AG04449 (cell line): ENCODE measurements at regions of chr9 and their contacts with region 1.

Region 1: DNA sequence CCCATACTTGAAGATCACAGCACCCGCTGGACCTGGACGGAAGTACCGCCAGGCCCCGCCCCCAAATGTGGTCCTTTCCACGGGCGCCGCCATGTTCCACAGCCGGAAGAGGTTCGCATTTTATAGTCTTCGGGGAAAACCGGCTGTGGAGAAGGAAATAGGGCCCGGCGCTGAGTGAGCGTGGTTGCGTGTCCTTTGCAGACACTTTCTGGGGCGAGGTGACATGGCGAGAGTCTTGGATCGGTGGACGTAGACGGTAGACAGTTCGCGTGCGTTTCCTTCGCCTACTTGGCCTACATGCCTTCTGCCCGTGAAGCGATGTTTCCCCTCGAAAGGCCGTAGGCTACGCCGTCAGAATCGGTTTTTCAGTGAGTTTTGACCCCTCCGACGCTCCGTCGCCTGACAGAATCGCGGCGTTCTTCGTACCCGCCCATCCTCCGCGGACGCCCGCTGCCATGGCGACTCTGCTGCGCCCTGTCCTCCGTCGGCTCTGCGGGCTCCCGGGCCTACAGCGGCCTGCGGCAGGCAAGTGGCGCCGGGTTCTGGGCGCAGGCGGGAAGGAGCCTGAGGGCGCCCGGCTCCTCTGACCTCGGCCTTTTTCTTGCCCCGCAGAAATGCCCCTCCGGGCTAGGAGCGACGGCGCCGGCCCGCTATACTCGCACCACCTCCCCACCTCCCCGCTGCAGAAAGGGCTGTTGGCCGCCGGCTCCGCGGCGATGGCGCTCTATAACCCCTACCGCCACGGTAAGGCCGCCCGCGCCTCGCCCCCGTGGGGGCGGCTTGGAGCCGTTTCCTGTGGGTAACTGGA is at the starts of genes COQ4 and TRUB2:
- DNase-seq: peak; percentile 59
- H3K4me3 ChIP-seq: peak within 1 kb of the TSS; percentile 97
- CTCF ChIP-seq: no peak

Region 2: DNA sequence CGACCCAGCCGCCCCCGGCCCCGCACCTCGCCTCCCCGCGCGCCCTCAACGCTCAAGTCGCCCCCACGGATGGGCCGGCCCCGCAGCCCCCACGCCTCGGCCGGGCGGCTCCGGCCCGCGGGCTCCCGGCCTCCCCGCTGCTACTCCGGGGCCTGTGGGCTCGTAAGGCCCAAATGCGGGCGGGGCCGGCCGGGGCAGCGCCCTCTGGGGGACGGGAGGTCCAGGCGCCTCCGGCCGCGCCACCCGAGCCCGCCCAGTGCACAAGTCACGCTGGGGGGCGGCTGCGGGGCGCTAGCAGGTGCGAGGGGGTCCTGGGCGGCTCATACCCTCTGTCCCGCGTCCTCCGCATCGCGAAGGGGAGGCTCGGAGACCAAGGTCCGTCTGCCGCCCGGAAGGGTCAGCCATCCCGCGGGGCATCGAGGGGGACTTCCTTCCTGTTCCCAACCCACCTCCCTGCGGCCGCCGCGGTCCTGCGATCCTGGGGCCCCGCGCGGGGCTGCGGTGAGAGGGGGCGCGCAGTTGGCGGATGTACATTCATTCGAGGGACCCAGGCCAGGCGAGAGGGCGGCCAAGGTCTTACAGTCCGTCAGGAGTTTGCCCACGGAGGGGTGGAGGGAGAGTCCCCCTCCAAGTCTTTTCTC is 131.1 kb before region 1 on chr9 and contains the start of gene CIZ1:
- CTCF ChIA-PET with region 1: no interaction called
- POLR2A ChIA-PET with region 1: no interaction called
- DNase-seq: no peak
- H3K4me3 ChIP-seq: peak within 1 kb of the TSS; percentile 82
- CTCF ChIP-seq: peak; percentile 80

Region 3: GRCh38 chr9:128271108-128271507 is 51.5 kb before region 1 on chr9:
- CTCF ChIA-PET with region 1: no interaction called
- POLR2A ChIA-PET with region 1: no interaction called
- DNase-seq: no peak
- H3K4me3 ChIP-seq: no peak overlapping the region
- CTCF ChIP-seq: no peak

Region 4: GRCh38 chr9:128333451-128333869 is 10.9 kb after region 1 on chr9:
- CTCF ChIA-PET with region 1: interaction called, 10 read pairs
- POLR2A ChIA-PET with region 1: interaction called, 3 read pairs
- DNase-seq: no peak
- H3K4me3 ChIP-seq: no peak overlapping the region
- CTCF ChIP-seq: no peak

Region 5: DNA sequence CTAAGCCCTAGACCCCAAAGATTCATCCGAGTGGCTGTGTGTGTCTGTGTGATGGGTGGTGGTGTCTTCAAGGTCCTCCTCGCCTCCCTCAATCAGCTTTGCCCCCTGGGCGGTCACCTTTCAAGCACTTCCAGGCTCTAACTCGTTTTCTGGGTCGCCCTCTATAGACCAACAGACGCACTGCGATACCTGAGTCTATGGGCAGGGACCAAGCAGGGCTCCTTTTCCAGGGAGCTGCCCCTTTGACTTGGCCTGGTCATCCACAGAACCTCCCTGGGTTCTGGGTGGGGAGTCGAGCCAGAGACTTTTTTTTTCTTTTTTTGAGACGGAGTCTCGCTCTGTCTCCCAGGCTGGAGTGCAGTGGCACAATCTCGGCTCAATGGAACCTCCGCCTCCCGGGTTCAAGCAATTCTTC is 18.8 kb after region 1 on chr9:
- CTCF ChIA-PET with region 1: interaction called, 15 read pairs
- POLR2A ChIA-PET with region 1: interaction called, 4 read pairs
- DNase-seq: no peak
- H3K4me3 ChIP-seq: peak overlapping the region; percentile 82
- CTCF ChIP-seq: peak; percentile 79